IMR-90 (cell line): ENCODE measurements at regions of chr1 and their contacts with region 1.

Region 1: DNA sequence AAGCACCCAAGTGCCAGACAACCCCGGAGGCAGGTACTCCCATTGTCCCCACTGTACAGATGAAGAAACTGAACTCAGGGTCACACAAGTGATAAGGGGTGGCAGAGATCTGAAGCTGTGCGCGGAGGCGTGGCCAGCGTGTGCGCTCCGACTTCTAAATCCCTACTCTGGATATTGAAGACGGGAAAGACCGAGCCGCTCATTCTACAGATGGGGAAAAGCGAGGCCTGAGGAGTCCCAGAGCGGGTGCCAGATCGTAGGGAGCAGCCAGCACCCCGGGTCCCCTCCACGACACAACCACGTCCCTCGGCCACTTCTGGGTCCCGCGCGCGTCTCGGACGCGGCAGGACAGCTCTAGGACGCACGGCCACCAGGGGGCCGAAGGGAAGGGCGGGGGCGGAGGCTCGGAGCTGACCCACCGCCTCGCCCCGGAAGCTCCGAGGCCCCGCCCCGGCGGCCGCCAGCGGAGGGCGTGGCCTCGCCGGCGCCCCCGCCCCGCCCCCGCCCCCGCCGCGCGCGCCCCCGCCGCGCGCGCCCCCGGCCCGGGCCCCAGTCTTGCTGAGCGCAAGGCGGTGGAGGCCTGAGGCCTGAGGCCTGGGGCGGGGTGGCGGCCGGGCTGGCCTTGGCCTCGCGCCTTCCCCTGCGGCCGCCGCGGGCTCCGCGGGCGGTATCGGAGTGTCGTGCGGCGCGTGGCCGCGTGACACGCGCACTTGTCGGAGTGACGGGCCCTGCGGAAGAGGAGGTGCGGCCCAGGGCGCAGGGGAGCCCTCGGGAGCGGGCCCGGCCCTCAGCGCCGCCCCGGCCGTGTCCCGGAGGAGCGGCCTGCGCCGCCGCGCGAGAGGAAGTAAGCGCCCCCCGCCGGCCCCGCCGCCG is at the start of gene H6PD:
- DNase-seq: peak; percentile 75
- ATAC-seq: peak; percentile 92
- H3K4me3 ChIP-seq: peak within 1 kb of the TSS; percentile 95
- H3K27ac ChIP-seq: peak within 1 kb of the TSS; percentile 95
- H3K4me1 ChIP-seq: peaks cover 17% of the 10 kb centered on the region
- H3K27me3 ChIP-seq: no peaks in the 10 kb centered on the region
- CTCF ChIP-seq: peak; percentile 74
- POLR2A ChIP-seq: peak; percentile 94
- RAD21 ChIP-seq: peak; percentile 47
- total RNA-seq, gene H6PD: 8.3 and 9.3 TPM in 2 replicates

Region 2: GRCh38 chr1:8259498-8260290 is 974.8 kb before region 1 on chr1:
- CTCF ChIA-PET with region 1: no interaction called
- POLR2A ChIA-PET with region 1: no interaction called
- dilution Hi-C with region 1: no loop called
- in situ Hi-C with region 1: no loop called
- intact Hi-C with region 1: no loop called
- DNase-seq: peak; percentile 85
- ATAC-seq: peak; percentile 93
- H3K4me3 ChIP-seq: peak overlapping the region; percentile 3; the same call in 1 of the 2 replicates
- H3K27ac ChIP-seq: peak overlapping the region; percentile 45; the same call in 1 of the 2 replicates
- H3K4me1 ChIP-seq: peaks cover 11% of the 10 kb centered on the region
- H3K27me3 ChIP-seq: no peaks in the 10 kb centered on the region
- CTCF ChIP-seq: no peak
- POLR2A ChIP-seq: no peak
- RAD21 ChIP-seq: no peak

Region 3: DNA sequence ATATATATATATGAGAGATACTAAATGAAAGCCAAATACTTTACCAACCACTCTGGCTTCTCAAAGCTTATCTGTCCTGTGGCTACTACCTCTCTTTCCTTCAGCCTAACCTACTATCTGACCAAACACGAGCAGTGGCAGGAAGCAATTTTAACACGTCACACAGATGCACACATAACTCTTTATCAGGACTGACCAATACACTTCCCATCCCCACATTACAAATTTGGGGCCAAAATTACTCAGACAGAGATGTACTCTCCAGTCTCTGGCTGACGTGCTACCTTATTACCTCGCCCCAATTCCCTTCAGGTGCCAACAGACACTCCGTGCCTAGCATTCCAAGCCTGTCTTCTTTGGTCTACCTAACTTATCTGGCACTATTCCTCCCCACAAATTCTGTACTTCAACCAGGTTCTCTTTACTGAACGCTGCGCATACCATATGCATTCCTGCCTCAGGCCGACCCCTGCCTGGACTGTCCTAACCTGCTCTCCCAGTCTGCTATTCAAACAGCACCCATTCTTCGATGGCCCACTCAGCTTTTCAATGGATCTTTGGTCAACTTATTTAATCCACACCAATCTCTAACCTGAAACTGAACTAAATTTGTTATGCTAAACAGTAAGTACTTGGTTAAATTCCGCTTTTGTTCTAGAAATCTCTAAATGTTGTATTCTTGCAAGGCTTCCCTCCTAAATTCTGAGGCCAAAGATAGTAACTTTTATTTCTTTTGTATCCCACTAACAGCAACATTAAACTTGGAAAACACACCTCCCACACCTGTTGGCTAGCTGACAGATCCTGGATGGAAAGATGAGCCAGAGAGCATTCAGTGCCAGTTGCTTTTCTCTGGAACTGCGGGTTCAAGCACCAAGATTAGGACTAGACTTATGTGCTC is 444.9 kb before region 1 on chr1:
- CTCF ChIA-PET with region 1: interaction called, 11 read pairs
- POLR2A ChIA-PET with region 1: no interaction called
- dilution Hi-C with region 1: no loop called
- in situ Hi-C with region 1: no loop called
- intact Hi-C with region 1: no loop called
- DNase-seq: no peak
- ATAC-seq: no peak
- H3K4me3 ChIP-seq: no peak overlapping the region
- H3K27ac ChIP-seq: no peak overlapping the region
- H3K4me1 ChIP-seq: no peaks in the 10 kb centered on the region
- H3K27me3 ChIP-seq: no peaks in the 10 kb centered on the region
- CTCF ChIP-seq: no peak
- POLR2A ChIP-seq: no peak
- RAD21 ChIP-seq: no peak

Region 4: DNA sequence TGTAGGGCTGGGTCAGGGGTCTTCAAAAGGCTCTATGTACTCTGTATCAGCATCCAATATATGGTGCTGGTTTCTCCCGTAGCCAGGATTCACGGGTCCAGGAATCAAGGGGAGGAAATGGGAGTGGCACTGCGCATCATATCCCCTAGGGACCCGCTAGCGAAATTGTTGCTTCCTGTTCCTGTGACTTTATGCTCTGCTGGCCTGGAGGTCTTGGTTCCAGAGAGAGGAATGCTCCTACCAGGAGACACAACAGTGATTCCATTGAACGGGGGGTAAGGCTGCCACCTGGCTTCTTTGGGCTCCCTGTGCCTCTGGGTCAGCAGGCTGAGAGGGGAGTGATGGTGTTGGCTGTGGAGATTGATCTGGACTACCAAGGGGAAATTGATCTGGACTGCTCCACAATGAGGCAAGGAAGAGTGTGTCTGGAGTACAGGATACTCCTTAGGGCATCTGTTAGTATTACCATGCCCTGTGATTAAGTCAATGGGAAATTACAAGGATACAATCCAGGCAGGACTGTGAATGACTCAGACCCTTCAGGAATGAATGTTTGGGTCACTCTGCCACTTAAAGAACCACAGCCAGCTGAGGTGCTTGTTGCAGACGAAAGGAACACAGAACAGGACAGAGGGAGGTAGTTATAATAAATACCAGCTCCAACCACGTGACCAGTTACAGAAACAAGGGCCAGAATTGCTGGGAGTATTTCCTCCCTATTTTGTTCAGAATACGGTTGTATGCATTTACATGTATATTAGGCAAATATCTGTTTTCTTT is 68.5 kb after region 1 on chr1:
- CTCF ChIA-PET with region 1: no interaction called
- POLR2A ChIA-PET with region 1: no interaction called
- dilution Hi-C with region 1: no loop called
- in situ Hi-C with region 1: no loop called
- intact Hi-C with region 1: no loop called
- DNase-seq: peak; percentile 97
- ATAC-seq: peak; percentile 90
- H3K4me3 ChIP-seq: no peak overlapping the region
- H3K27ac ChIP-seq: peak overlapping the region; percentile 69
- H3K4me1 ChIP-seq: peaks cover 28% of the 10 kb centered on the region
- H3K27me3 ChIP-seq: no peaks in the 10 kb centered on the region
- CTCF ChIP-seq: no peak
- POLR2A ChIP-seq: no peak
- RAD21 ChIP-seq: peak; percentile 20